ENCODE measurements at regions of chr1 and their contacts with region 1.

Region 1: DNA sequence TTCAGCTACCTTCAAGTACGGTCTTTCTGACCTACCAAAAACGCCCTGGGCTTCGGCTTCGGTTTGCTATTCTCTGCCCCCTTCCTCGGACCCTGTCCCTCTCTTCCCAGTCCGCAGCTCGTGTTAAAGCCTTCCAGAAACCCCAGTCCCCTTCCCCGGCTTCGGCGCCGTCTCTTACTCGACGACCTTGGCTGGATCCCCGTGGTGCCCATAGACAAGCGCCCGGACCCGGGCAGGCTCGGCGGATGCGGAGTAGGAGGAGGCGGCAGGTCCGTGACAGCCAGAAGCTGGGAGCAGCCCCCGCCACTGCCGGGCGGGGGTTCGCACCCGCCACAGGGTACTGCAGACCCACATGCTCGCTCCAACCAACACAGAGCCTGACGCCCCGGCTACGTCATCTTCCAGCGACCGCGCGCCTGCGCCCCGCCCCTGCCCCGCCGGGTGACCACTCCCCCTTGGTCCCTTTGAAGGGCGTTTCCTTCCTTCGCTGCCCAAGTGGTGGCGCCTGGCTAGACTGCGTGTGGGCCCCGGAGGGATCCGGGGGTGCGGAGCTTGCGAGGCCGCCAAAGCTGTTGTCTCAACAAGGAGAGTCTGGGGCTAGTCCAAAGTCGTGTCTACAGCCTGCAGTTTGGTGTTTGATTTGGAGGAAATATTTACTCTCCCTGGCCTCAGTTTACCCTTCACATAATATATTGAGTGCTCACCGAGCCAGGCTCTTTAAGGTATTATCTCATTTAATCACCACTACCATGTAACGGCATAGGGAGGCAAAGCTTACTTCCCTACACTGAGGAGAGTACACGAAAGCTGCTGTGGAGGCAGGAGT is at the start of gene MECR:
- DNase-seq: peak; percentile 93 to 97
- ATAC-seq: peak; percentile 98 to 99 (median 99)
- H3K4me3 ChIP-seq: peak within 1 kb of the TSS; percentile 85
- H3K27ac ChIP-seq: peak within 1 kb of the TSS; percentile 86
- H3K4me1 ChIP-seq: peaks cover 11% of the 10 kb centered on the region
- H3K27me3 ChIP-seq: no peaks in the 10 kb centered on the region
- CTCF ChIP-seq: peak; percentile 16
- total RNA-seq, gene MECR: 22.7 to 42.6 (median 34.1) TPM

Region 2: GRCh38 chr1:29282924-29283811 is 52.4 kb after region 1 on chr1:
- intact Hi-C with region 1: no loop called
- DNase-seq: peak; percentile 31 to 69
- ATAC-seq: peak in 3 of 4 donors; percentile 22 to 53 (median 26)
- H3K4me3 ChIP-seq: no peak overlapping the region
- H3K27ac ChIP-seq: no peak overlapping the region
- H3K4me1 ChIP-seq: no peaks in the 10 kb centered on the region
- H3K27me3 ChIP-seq: no peaks in the 10 kb centered on the region
- CTCF ChIP-seq: no peak

Region 3: GRCh38 chr1:30085811-30086770 is 855.3 kb after region 1 on chr1:
- intact Hi-C with region 1: loop called in 1 of 2 experiments (anchors 10 kb)
- DNase-seq: peak; percentile 55 to 64
- ATAC-seq: peak in 3 of 4 donors; percentile 55 to 64 (median 63)
- H3K4me3 ChIP-seq: no peak overlapping the region
- H3K27ac ChIP-seq: no peak overlapping the region
- H3K4me1 ChIP-seq: peaks cover 8% of the 10 kb centered on the region
- H3K27me3 ChIP-seq: peaks cover 0 to 11% (median 0%) of the 10 kb centered on the region in 3 donors
- CTCF ChIP-seq: peak; percentile 47

Region 4: GRCh38 chr1:30525971-30526651 is 1295.3 kb after region 1 on chr1:
- intact Hi-C with region 1: loop called in 1 of 2 experiments (anchors 10 kb)
- DNase-seq: peak; percentile 71 to 82
- ATAC-seq: peak; percentile 55 to 67 (median 60)
- H3K4me3 ChIP-seq: no peak overlapping the region
- H3K27ac ChIP-seq: peak overlapping the region; percentile 90
- H3K4me1 ChIP-seq: peaks cover 58% of the 10 kb centered on the region
- H3K27me3 ChIP-seq: no peaks in the 10 kb centered on the region
- CTCF ChIP-seq: no peak

Region 5: DNA sequence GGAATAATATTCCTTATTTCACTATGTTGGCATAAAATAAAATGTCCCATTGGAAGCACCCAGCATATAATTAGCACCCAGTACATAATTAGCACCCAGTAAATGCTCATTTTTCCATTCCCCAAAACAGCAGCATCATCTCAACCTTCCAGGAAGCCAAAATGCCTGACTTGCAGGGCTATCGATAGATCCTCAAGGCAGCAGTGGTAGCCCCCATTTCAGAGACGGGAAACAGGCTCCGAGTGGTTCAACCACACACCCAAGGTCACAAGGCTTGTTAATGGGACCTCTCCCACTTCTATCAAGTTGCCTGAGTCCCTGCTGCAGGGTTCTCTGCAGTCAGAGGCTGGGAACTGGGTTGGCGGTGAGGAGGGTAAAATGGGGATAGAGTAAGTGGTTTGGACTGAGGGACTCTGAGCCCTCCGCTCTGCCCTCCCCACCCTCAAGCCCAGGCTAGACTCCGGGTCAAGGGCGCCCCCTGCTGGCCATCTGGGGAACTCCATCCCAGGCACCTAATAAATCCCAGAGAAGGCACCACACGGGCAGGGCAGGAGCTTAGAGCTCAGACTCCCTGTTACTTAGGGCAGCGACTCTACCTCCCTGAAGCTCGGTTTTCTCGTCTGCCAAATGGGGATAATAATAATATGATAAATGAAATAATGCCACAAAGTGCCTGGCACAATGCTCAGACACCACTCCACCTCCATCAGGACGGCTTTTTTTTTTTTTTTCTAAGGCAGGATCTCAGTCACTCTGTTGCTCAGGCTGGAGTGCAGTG is 1548.7 kb after region 1 on chr1:
- intact Hi-C with region 1: loop called in 1 of 2 experiments (anchors 10 kb)
- DNase-seq: peak; percentile 84 to 89
- ATAC-seq: peak; percentile 70 to 77 (median 73)
- H3K4me3 ChIP-seq: no peak overlapping the region
- H3K27ac ChIP-seq: no peak overlapping the region
- H3K4me1 ChIP-seq: peaks cover 10% of the 10 kb centered on the region
- H3K27me3 ChIP-seq: no peaks in the 10 kb centered on the region
- CTCF ChIP-seq: peak; percentile 93